Adrenal gland (tissue), 19 donors: ENCODE measurements at regions of chr10 and their contacts with region 1.

Region 1: DNA sequence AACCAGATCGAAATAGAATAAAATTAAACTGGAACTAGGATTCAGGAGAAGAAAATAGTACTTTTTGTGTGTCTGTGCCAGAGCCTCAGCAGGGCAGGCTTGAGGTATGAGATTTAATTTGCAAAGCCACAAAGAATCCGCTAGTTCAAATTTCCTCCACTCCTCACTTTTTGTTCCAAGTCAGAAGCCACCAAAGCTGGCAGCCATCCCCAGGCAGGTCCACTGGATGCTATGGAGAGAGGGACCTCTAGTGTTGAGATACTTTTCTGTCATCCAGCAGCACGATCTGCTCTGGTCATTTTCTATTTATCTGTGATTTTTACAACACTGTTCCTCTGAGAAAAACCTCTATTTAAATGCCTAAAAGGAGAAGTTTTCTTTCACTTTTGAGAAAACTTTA is 147.9 kb upstream of the FRMD4A start:
- DNase-seq: peak; percentile 47 to 80 (median 73)
- H3K4me3 ChIP-seq: no peak overlapping the region
- H3K27ac ChIP-seq: no peak overlapping the region
- H3K4me1 ChIP-seq: no peaks in the 10 kb centered on the region
- H3K27me3 ChIP-seq: no peaks in the 10 kb centered on the region
- CTCF ChIP-seq: peak; percentile 38 to 67 (median 62)
- POLR2A ChIP-seq: no peak

Region 2: GRCh38 chr10:14191871-14192270 is 286.7 kb before region 1 on chr10:
- intact Hi-C with region 1: loop called (anchors 2 to 10 kb)
- DNase-seq: no peak
- H3K4me3 ChIP-seq: no peak overlapping the region
- H3K27ac ChIP-seq: no peak overlapping the region
- H3K4me1 ChIP-seq: no peaks in the 10 kb centered on the region
- H3K27me3 ChIP-seq: no peaks in the 10 kb centered on the region
- CTCF ChIP-seq: no peak
- POLR2A ChIP-seq: no peak

Region 3: GRCh38 chr10:14598809-14599764 is 120.5 kb after region 1 on chr10:
- intact Hi-C with region 1: no loop called
- DNase-seq: no peak
- H3K4me3 ChIP-seq: no peak overlapping the region
- H3K27ac ChIP-seq: no peak overlapping the region
- H3K4me1 ChIP-seq: peaks cover 14 to 24% of the 10 kb centered on the region in 2 donors
- H3K27me3 ChIP-seq: no peaks in the 10 kb centered on the region
- CTCF ChIP-seq: no peak
- POLR2A ChIP-seq: no peak